Panc1 (cell line): ENCODE measurements at regions of chr3 and their contacts with region 1.

Region 1: DNA sequence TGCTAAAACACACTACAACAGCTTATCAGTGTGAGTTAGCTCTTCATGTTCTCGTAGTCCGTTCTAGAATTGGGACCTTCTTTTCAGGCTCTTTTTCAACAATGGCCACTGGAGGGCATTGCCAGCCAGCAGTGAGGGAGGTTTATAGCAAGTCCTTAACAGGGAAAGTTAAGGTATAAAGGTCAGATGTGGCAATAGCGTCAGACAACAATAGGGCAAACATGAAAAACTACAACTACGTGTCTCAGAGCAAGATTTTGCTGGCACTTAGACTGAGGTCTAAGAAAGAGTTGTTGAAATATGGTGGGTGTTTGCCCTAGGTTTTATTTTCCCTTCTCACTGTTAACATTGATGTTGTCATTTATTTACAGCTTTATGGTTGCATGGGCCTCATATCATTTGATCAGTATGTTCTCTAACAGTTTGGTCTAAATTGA is 161.4 kb downstream of the GMNC start:
- DNase-seq: peak; percentile 43
- ATAC-seq: 0 out of 2 replicates have a peak, but pooled peaks have one; percentile 63
- H3K4me3 ChIP-seq: no peak overlapping the region
- H3K27ac ChIP-seq: no peak overlapping the region
- H3K4me1 ChIP-seq: no peaks in the 10 kb centered on the region
- H3K27me3 ChIP-seq: no peaks in the 10 kb centered on the region
- CTCF ChIP-seq: peak; percentile 76

Region 2: DNA sequence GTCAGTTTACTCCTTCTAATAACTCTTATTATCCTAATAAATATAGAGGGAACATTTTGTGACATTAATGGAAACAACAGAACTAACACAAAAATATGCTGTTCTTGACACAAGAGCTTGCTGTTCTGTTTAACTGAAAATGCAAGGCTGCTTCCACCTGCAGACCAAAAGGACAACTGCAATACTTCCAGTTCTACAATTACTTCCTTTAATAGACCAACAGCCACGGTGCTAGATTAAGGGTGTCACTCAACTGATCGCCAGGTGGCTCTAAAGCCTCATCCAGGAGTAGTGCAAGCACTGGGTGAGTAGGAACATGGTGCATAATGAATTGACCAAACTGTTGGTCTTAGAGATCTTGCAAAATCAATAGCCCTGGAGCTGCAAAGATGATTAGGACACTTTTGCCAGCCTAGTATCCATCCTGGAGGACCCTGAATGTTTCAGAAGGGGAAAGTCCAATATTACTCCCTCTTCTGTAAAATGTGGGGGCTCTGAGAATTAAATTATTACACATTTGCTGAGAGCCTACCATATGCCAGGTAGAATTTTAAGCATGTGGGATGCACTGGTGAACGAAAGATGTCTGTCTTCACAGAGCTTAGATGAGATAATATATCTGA is 316.8 kb before region 1 on chr3:
- CTCF ChIA-PET with region 1: no interaction called
- POLR2A ChIA-PET with region 1: no interaction called
- in situ Hi-C with region 1: no loop called
- intact Hi-C with region 1: loop called (anchors 10 kb)
- DNase-seq: peak; percentile 84
- ATAC-seq: peak; percentile 91
- H3K4me3 ChIP-seq: no peak overlapping the region
- H3K27ac ChIP-seq: peak overlapping the region; percentile 40; the same call in 1 of the 2 replicates
- H3K4me1 ChIP-seq: 0 out of 2 replicates have a peak, but pooled peaks cover 3% of the 10 kb centered on the region
- H3K27me3 ChIP-seq: no peaks in the 10 kb centered on the region
- CTCF ChIP-seq: peak; percentile 89

Region 3: GRCh38 chr3:190513409-190514162 is 187.5 kb before region 1 on chr3 and contains the start of gene IL1RAP:
- CTCF ChIA-PET with region 1: no interaction called
- POLR2A ChIA-PET with region 1: no interaction called
- in situ Hi-C with region 1: no loop called
- intact Hi-C with region 1: loop called (anchors 10 kb)
- DNase-seq: peak; percentile 64
- ATAC-seq: peak; percentile 99
- H3K4me3 ChIP-seq: peak within 1 kb of the TSS; percentile 87 to 91
- H3K27ac ChIP-seq: peak within 1 kb of the TSS; percentile 66
- H3K4me1 ChIP-seq: peaks cover 4% of the 10 kb centered on the region; the same call in 1 of the 2 replicates
- H3K27me3 ChIP-seq: no peaks in the 10 kb centered on the region
- CTCF ChIP-seq: peak; percentile 84
- total RNA-seq, gene IL1RAP: 5.2 TPM

Region 4: GRCh38 chr3:190666821-190667220 is 34.3 kb before region 1 on chr3:
- CTCF ChIA-PET with region 1: no interaction called
- POLR2A ChIA-PET with region 1: no interaction called
- in situ Hi-C with region 1: no loop called
- intact Hi-C with region 1: no loop called
- DNase-seq: no peak
- ATAC-seq: no peak
- H3K4me3 ChIP-seq: no peak overlapping the region
- H3K27ac ChIP-seq: no peak overlapping the region
- H3K4me1 ChIP-seq: no peaks in the 10 kb centered on the region
- H3K27me3 ChIP-seq: no peaks in the 10 kb centered on the region
- CTCF ChIP-seq: no peak

Region 5: GRCh38 chr3:191051037-191051436 is 349.9 kb after region 1 on chr3:
- CTCF ChIA-PET with region 1: no interaction called
- POLR2A ChIA-PET with region 1: no interaction called
- in situ Hi-C with region 1: no loop called
- intact Hi-C with region 1: loop called (anchors 5 kb)
- DNase-seq: no peak
- ATAC-seq: peak; percentile 81
- H3K4me3 ChIP-seq: no peak overlapping the region
- H3K27ac ChIP-seq: no peak overlapping the region
- H3K4me1 ChIP-seq: no peaks in the 10 kb centered on the region
- H3K27me3 ChIP-seq: no peaks in the 10 kb centered on the region
- CTCF ChIP-seq: peak; percentile 68